IMR-90 (cell line): ENCODE measurements at regions of chr6 and their contacts with region 1.

Region 1: DNA sequence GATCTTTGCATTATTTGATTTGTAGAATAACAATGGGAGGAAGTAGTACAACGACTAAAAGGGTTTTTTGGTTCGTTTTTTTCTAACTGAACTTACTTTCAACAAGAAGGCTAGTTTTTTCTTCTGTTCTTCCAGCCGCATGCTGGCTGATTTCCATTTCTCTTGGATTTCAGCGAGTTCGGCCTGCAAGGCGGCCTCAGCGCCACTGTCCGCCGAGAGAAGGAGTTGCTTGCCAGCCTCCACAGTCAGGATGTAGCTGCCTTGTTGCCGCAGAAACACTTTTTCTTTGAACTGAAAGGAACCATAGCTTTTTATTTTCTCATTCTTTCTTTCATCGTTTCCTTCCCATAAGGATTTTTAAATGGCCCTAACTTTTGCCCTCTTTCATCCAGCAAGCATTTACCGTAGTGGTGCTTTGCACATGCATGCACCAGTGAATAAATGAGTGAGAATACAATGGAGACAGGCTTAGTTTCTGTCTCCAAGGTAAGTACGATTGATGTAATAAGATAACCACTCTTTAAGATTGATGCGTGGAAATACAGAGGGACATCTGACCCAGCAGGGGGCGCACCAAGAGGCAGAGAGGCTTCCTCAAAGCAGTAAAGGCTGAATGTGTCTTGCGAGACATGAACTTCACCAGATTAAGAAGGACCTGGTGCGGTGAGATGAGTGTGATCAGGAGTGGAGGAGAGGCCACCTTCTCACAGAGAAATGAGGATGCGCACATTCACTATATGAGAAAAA is 398.8 kb downstream of the ESR1 start:
- DNase-seq: peak; percentile 8
- ATAC-seq: no peak
- H3K4me3 ChIP-seq: no peak overlapping the region
- H3K27ac ChIP-seq: no peak overlapping the region
- H3K4me1 ChIP-seq: no peaks in the 10 kb centered on the region
- H3K27me3 ChIP-seq: no peaks in the 10 kb centered on the region
- CTCF ChIP-seq: peak; percentile 38
- POLR2A ChIP-seq: no peak
- RAD21 ChIP-seq: no peak

Region 2: GRCh38 chr6:151524059-151524458 is 682.2 kb before region 1 on chr6:
- CTCF ChIA-PET with region 1: no interaction called
- POLR2A ChIA-PET with region 1: no interaction called
- dilution Hi-C with region 1: no loop called
- in situ Hi-C with region 1: no loop called
- intact Hi-C with region 1: no loop called
- DNase-seq: no peak
- ATAC-seq: no peak
- H3K4me3 ChIP-seq: no peak overlapping the region
- H3K27ac ChIP-seq: no peak overlapping the region
- H3K4me1 ChIP-seq: no peaks in the 10 kb centered on the region
- H3K27me3 ChIP-seq: no peaks in the 10 kb centered on the region
- CTCF ChIP-seq: no peak
- POLR2A ChIP-seq: no peak
- RAD21 ChIP-seq: no peak

Region 3: GRCh38 chr6:151765444-151765886 is 440.8 kb before region 1 on chr6:
- CTCF ChIA-PET with region 1: interaction called, 3 read pairs
- POLR2A ChIA-PET with region 1: no interaction called
- dilution Hi-C with region 1: no loop called
- in situ Hi-C with region 1: no loop called
- intact Hi-C with region 1: loop called (anchors 10 kb)
- DNase-seq: peak; percentile 77
- ATAC-seq: peak; percentile 70
- H3K4me3 ChIP-seq: no peak overlapping the region
- H3K27ac ChIP-seq: no peak overlapping the region
- H3K4me1 ChIP-seq: 0 out of 2 replicates have a peak, but pooled peaks cover 1% of the 10 kb centered on the region
- H3K27me3 ChIP-seq: no peaks in the 10 kb centered on the region
- CTCF ChIP-seq: peak; percentile 70
- POLR2A ChIP-seq: no peak
- RAD21 ChIP-seq: peak; percentile 62

Region 4: DNA sequence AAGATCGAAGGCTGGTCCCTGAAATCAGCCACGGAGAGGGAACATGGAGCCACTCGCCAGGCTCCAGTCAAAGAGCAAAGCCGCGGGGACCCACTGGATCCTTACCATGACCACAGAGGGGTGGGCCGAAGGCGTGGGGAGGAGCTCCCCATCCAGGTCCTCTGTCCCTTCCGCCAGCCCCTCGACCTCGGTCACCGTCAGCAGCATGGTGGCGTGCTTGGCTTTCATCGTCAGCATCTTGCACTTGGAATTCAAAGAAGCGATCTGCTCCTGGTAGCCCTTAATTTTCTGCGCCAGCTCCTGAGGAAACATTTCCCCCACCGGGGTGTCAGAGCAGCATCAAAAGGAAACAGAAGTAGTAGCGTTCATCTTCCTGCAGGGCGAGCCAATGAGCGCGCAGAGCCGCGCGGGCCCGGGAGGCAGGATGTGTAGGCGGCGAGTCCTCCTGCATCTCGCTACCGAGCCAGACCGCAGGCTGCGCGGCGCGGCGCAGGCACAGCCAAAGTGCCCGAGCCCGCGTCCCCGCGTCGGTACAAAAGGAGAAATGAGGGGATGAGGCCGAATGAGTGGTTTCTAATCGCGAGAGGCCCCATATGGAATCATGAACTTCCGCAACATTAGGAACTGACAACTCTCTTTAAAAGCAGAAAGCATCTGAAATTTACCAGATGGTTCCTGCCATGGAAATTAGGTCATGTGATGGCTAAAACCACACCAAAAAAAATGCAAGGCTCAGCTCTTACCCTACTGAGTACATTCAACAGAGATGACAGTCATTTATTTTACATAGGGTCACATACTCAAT is 95.7 kb after region 1 on chr6:
- CTCF ChIA-PET with region 1: no interaction called
- POLR2A ChIA-PET with region 1: no interaction called
- dilution Hi-C with region 1: no loop called
- in situ Hi-C with region 1: no loop called
- intact Hi-C with region 1: no loop called
- DNase-seq: peak; percentile 90
- ATAC-seq: peak; percentile 98
- H3K4me3 ChIP-seq: peak overlapping the region; percentile 77
- H3K27ac ChIP-seq: peak overlapping the region; percentile 86
- H3K4me1 ChIP-seq: peaks cover 5% of the 10 kb centered on the region; the same call in 1 of the 2 replicates
- H3K27me3 ChIP-seq: no peaks in the 10 kb centered on the region
- CTCF ChIP-seq: peak; percentile 49
- POLR2A ChIP-seq: peak; percentile 77
- RAD21 ChIP-seq: peak; percentile 37